GM10248 (cell line): ENCODE measurements at regions of chr14 and their contacts with region 1.

Region 1: DNA sequence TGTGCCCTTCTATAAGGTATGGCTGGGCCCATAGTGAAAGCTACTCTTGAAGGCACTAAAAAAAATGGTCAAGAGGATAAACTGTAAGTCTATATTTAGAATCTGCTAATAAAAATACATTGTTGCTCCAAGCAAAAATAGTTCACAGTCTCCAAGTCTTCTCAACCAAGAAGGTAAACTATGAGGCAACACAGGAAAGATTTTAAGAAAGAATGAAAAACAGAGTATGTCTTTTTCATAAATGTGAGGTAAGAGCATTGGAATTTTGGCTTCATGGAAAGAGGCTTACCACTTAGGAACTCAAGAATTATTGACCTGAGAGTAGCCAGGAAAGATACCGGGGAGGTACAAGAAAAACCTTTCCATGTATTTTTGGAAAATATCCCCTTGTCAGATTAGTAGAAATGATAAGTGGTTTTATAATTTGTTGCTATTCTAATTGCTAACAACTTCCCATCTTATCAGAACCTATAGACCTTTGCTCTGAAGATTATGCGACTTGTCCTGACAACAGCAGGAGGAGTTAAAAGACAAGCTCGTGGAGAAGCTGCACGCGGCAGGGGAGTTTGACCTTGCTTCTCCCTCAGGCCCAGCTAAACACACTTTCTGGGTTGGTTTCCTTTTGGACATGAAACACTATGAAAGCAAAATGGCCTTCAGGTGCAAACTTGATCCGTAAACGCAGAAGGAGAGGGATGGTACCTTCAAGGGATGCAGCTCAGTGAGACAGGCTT is 238.1 kb downstream of the FOXN3 start:
- DNase-seq: no peak
- CTCF ChIP-seq: no peak

Region 2: GRCh38 chr14:89025561-89026236 is 153.3 kb before region 1 on chr14:
- CTCF ChIA-PET with region 1: no interaction called
- POLR2A ChIA-PET with region 1: no interaction called
- DNase-seq: no peak
- CTCF ChIP-seq: no peak

Region 3: GRCh38 chr14:89165189-89166181 is 13.5 kb before region 1 on chr14:
- CTCF ChIA-PET with region 1: interaction called, 59 read pairs
- POLR2A ChIA-PET with region 1: no interaction called
- DNase-seq: peak; percentile 45
- CTCF ChIP-seq: no peak

Region 4: DNA sequence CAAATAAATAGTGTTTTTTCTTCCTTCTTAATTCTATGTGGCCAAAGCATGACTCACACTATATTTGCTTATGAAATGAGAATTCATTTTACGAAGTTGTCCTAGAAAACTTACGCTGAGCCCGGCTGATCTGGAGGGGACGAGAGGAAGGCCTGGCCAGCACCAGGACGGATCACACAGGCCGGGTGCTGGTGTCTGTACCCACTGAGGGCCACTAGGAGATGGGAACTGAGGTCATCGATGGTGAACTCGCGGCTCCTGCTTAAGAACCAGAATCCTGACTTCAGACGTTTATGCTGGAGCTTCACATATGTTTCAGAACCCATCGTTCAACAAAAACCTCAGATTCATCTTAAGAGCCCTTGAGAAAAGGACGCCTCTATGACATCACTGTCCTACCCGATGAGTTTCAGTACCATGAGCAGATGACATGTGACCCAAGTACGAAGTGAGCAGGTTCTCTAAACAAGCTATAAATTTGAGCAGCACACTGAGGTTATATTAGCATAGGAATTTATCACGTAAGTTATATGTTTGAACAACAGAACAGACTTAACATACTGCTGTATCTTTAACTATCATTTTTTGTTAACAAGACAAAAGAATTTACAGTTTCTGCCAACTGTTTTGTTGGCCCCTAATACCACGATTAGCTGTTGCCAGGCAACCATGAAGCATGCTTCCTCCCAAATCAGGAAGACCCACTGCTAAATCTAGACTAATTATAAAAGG is 126.2 kb after region 1 on chr14:
- CTCF ChIA-PET with region 1: interaction called, 15 read pairs
- POLR2A ChIA-PET with region 1: no interaction called
- DNase-seq: peak; percentile 59
- CTCF ChIP-seq: no peak